Gastrocnemius medialis (tissue), 4 donors: ENCODE measurements at regions of chr9 and their contacts with region 1.

Region 1: GRCh38 chr9:97501177-97501971 is at the start of gene TMOD1:
- DNase-seq: peak; percentile 69 to 82
- ATAC-seq: peak; percentile 76 to 78
- H3K4me3 ChIP-seq: peak within 1 kb of the TSS; percentile 78 to 93 (median 84)
- H3K27ac ChIP-seq: peak within 1 kb of the TSS; percentile 97 to 98 (median 98)
- H3K4me1 ChIP-seq: peaks cover 35 to 43% of the 10 kb centered on the region in 2 donors
- H3K27me3 ChIP-seq: no peaks in the 10 kb centered on the region
- CTCF ChIP-seq: peak in 1 of 5 experiments; percentile 13
- POLR2A ChIP-seq: no peak
- total RNA-seq, gene TMOD1: 82.3 to 202 (median 175) TPM

Region 2: DNA sequence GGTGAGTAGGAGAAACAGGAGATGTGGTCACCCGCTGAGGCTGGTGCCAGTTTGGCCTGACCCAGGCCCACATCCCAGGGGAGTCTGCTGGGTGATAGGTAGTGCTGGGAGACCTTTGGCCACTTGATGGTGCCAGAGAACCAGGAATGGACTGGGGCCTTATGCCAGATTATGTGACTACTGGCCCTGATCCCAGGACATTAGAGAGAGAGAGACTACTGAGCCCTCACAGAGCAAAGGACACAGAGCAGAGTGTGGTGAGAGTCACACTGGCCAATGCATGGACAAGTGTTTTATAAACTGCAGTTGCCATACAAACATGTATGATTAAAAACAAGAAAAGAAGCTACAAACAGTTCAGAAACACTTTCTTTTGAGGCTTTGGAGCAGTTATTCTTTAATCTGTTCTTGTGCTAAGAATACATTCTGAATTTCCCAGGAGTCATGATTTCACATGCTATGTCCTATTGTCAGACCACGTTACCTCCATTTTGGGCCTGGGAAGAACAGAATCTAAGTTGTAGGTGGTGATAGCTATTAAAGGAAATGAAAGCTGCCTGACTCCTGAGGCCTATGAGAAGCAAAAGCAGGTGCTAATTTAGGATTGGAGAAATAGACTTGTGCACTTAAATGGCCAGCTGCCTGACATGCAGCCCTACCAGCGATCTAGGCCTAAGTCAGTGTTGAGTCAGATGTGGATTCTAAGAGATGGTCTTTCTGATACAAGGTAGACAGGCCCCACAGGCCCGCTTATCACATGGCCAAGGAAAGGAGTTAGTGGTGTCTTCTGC is 32.5 kb before region 1 on chr9:
- in situ Hi-C with region 1: no loop called
- intact Hi-C with region 1: loop called (anchors 1 kb)
- DNase-seq: peak; percentile 76 to 89
- ATAC-seq: peak; percentile 99 to 100
- H3K4me3 ChIP-seq: no peak overlapping the region
- H3K27ac ChIP-seq: peak overlapping the region; percentile 75 to 84 (median 79)
- H3K4me1 ChIP-seq: peaks cover 7 to 17% of the 10 kb centered on the region in 2 donors
- H3K27me3 ChIP-seq: no peaks in the 10 kb centered on the region
- CTCF ChIP-seq: peak; percentile 88 to 93 (median 90)
- POLR2A ChIP-seq: no peak

Region 3: DNA sequence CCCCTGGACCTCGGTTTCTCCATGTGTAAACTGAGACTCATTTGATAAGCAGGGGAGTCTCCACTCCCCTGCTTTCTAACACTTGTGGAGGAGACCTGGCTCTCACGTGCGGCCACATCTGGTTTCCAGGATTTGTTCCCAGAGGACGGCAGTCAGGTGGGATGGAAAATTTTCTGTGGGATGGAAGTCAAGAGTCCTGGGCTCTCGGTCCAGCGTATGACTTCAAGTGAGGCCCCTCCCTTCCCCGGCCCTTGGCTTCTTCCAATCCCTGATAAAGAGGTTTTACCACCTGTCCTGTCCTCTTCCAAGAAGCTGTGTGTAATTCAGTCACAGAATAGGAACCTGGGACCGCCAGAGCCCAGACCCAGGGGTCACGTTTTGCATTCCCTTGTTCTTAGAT is 35.1 kb after region 1 on chr9:
- in situ Hi-C with region 1: no loop called
- intact Hi-C with region 1: loop called (anchors 5 kb)
- DNase-seq: peak; percentile 80 to 88
- ATAC-seq: peak; percentile 68 to 72
- H3K4me3 ChIP-seq: no peak overlapping the region
- H3K27ac ChIP-seq: peak overlapping the region; percentile 82 to 98 (median 96)
- H3K4me1 ChIP-seq: peaks cover 60 to 62% of the 10 kb centered on the region in 2 donors
- H3K27me3 ChIP-seq: no peaks in the 10 kb centered on the region
- CTCF ChIP-seq: no peak
- POLR2A ChIP-seq: no peak

Region 4: DNA sequence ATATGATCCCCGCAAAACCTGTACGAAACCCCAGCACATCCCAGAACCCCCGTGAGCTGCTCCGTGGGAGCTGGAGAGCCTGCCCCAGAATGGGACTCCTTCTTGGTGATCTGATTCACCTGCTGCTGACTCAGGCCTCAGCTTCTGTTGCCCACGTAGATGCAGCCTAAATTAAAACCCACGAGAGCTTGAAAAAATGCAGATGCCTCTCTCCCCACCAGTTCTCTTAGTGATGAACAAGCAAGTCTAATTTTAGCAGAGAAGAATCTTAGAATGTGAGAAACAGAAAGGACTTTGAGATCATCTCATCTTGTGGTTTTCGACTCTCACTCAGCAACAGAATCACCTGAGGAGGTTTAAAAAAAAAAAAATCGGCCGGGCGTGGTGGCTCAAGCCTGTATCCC is 57.7 kb after region 1 on chr9:
- in situ Hi-C with region 1: no loop called
- intact Hi-C with region 1: loop called (anchors 5 kb)
- DNase-seq: peak; percentile 35 to 64
- ATAC-seq: peak; percentile 47 to 55
- H3K4me3 ChIP-seq: peak overlapping the region in 1 of 4 donors; percentile 5
- H3K27ac ChIP-seq: peak overlapping the region; percentile 79 to 95 (median 88)
- H3K4me1 ChIP-seq: peaks cover 30 to 54% of the 10 kb centered on the region in 2 donors
- H3K27me3 ChIP-seq: no peaks in the 10 kb centered on the region
- CTCF ChIP-seq: no peak
- POLR2A ChIP-seq: peak in 1 of 2 donors; percentile 62

Region 5: DNA sequence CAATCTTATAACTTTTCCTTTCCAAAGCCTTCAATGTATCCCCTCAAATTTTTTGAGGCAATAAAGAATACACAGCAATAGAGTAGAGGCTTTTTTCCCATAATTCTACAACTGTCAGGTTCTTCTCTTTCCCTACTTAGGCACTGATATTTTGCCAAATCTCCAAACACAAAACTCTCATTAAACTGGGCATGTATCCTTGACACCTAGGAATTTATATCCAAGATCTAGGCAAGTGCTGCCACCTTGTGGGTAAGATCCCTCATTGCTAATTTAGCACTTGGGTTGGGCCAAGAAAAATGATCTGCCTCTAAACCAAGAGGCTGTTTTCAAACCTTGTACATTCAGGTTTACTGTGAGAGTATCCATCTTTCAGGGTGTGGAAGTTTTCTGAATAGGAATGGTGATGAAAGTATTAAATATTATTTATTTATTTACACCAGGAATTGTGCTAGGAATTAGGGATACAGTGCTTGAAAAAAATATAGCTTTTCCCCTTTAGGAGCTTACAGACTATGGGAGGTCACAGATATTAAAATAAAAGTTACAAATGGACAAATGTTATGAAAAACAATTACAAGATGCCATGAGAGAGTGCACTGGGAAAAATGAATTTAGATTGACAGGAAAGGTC is 114.2 kb after region 1 on chr9:
- in situ Hi-C with region 1: no loop called
- intact Hi-C with region 1: loop called (anchors 1 kb)
- DNase-seq: peak in 1 of 2 donors; percentile 64
- ATAC-seq: peak; percentile 64 to 79
- H3K4me3 ChIP-seq: no peak overlapping the region
- H3K27ac ChIP-seq: peak overlapping the region in 1 of 4 donors; percentile 39
- H3K4me1 ChIP-seq: peaks cover 0 to 8% of the 10 kb centered on the region in 2 donors
- H3K27me3 ChIP-seq: no peaks in the 10 kb centered on the region
- CTCF ChIP-seq: peak; percentile 83 to 87 (median 86)
- POLR2A ChIP-seq: no peak